ENCODE measurements at regions of chr13 and their contacts with region 1.

Region 1: DNA sequence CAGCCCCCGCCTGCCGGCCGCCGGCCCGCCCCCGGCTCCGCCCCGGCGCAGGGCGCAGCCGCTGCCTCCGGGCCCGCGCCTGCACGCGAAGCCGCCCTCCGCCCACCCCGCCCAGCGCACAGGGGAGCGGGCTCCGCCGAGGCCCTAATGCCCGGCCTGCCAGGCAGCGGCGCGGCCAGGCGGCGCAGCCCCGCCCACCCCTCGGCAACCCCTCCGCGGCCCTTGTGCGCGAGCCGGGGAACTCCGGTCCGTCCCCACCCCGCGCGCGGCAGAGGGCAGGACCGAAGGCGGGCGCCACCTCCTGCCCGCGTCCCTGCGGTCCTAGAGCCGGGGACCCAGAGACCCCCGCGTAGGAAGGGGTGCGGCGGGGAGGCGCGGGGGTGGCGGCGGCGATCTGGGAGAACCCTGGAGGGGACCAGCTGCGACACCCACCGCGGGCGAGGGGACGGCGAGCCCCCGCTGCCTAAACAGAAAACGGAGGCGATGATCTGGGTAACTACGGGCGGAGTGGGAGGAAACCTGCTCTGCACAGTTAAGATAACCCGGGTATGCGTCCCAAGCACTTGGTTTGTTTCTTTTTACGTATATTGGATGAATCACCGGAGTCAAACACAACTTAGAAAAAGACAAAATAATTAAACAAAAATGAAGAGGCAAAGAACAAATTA is 350 bp upstream of the USP12 start:
- DNase-seq: peak; percentile 92
- H3K4me3 Mint-ChIP-seq: peak overlapping the region; percentile 75
- H3K27ac Mint-ChIP-seq: peak overlapping the region; percentile 77
- H3K4me1 Mint-ChIP-seq: peaks cover 54% of the 10 kb centered on the region
- H3K27me3 Mint-ChIP-seq: no peaks in the 10 kb centered on the region

Region 2: DNA sequence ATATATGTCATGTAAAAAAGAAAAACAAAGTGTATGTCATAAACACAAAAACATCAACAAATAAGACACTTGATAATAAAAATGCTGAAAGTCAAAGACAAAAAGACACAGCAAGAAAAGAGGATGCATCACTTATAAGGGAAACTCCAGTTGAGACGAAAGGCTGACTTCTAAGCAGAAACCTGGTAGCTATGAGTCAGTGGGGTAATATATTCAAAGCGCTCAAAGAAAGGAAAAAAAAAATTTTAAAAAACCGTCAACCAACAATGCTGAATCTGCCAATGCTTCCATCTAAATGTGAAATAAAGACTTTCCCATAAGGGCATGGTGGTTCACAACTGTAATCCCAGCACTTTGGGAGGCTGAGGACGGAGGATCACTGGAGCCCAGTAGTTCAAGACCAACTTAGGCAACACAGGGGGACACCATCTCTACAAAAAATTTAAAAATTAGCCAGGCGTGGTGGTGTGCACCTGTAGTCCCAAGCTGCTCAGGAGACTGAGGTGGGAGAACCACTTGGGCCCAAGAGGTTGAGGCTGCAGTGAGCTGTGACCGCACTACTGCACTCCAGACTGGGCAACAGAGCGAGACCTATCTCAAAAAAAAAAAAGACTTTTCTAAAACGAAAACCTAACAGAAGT is 24.3 kb before region 1 on chr13:
- CTCF ChIA-PET with region 1: interaction called, 4 read pairs
- POLR2A ChIA-PET with region 1: interaction called, 6 read pairs
- intact Hi-C with region 1: loop called (anchors 1 kb)
- DNase-seq: no peak
- H3K4me3 Mint-ChIP-seq: peak overlapping the region; percentile 45
- H3K27ac Mint-ChIP-seq: peak overlapping the region; percentile 91
- H3K4me1 Mint-ChIP-seq: peaks cover 76% of the 10 kb centered on the region
- H3K27me3 Mint-ChIP-seq: no peaks in the 10 kb centered on the region

Region 3: DNA sequence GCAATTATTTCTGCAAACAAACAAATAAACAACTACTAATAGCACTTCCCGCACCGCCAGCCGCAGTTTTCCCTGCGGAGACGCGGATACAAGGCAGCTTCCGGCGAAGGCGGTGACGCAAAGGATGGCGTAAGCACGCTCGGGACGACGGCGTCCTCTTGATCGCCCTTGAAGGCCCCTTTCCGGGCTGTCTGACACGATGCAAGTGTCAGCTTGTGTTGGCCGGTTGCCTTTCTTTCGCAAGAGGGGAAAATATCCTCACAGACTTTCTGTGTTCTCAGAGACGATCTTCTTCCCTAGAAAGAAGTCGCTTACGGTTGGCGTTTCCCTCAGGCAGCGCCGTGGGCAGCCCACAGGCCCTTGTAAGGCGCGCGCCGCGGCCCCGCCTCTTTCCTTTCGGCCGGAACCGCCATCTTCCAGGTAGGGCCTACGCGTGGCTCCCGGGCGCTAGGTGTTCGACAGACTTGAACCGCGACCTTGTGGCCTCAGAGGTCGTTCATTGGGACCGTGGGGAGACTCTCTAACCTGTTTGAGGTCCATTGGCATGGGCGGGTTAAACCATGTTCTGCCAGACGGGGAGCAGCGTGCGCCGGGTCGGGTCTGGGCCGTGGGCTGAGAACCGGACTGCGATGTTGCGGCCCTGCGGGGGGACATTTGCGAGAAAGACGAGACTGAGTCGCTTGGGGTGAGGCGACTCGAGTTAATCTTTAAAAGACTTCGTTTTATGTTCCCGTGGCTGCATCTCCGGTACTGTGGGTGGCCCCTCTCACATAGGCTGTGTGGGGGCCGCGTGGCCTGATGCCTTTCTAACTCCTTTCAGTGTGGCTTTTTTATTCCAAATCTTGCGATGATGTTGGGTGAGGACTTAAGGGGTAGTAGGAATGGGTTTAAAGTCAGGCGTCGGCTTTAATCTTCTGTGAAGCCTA is 79.5 kb after region 1 on chr13 and contains the start of gene RPL21:
- CTCF ChIA-PET with region 1: no interaction called
- POLR2A ChIA-PET with region 1: interaction called, 12 read pairs
- intact Hi-C with region 1: loop called (anchors 1 kb)
- DNase-seq: peak; percentile 92
- H3K4me3 Mint-ChIP-seq: peak within 1 kb of the TSS; percentile 94
- H3K27ac Mint-ChIP-seq: peak within 1 kb of the TSS; percentile 95
- H3K4me1 Mint-ChIP-seq: peaks cover 48% of the 10 kb centered on the region
- H3K27me3 Mint-ChIP-seq: no peaks in the 10 kb centered on the region
- total RNA-seq, gene RPL21: 1,539 to 1,545 TPM

Region 4: GRCh38 chr13:27353166-27353583 is 181.2 kb after region 1 on chr13:
- CTCF ChIA-PET with region 1: interaction called, 4 read pairs
- POLR2A ChIA-PET with region 1: interaction called, 3 read pairs
- intact Hi-C with region 1: loop called (anchors 1 kb)
- DNase-seq: peak; percentile 79
- H3K4me3 Mint-ChIP-seq: peak overlapping the region; percentile 45
- H3K27ac Mint-ChIP-seq: peak overlapping the region; percentile 82
- H3K4me1 Mint-ChIP-seq: peaks cover 19% of the 10 kb centered on the region
- H3K27me3 Mint-ChIP-seq: peaks cover 12% of the 10 kb centered on the region

Region 5: DNA sequence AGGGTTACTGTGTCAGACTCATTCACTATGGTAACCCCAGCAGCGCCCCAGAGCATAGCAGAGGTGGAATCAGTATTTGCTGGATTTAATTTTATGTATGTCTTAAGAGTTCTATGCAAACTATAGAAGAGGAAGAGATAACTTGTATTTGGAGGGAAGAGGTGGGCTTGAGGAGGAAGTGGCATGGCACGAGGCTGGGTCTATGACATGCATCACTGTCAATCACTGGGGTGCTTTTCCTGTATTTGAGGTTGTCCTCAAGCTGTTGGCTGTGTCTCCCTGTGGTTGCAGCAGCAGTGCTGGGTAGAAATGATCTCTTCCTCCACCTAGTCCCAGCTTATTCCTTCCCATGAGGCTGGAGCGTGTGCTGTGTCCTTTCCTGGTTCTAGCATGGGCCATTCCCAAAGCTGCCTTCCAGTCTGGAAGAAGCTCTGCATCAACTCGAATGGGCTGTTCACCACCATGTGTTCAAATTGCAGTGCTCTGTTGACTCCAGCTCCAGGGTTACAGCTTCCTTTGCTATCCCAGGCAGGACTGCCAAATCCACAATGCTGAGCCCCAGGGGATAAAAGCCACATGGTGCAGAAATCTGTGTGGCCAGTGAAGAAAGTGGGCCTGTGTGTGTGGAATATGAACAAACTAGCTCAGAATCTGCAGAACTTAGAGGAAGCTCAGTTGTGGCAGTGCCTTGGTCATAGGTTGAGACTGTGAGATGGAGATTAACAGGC is 351.5 kb after region 1 on chr13:
- CTCF ChIA-PET with region 1: no interaction called
- POLR2A ChIA-PET with region 1: no interaction called
- intact Hi-C with region 1: no loop called
- DNase-seq: no peak
- H3K4me3 Mint-ChIP-seq: no peak overlapping the region
- H3K27ac Mint-ChIP-seq: no peak overlapping the region
- H3K4me1 Mint-ChIP-seq: no peaks in the 10 kb centered on the region
- H3K27me3 Mint-ChIP-seq: peaks cover 6% of the 10 kb centered on the region

Region 6: DNA sequence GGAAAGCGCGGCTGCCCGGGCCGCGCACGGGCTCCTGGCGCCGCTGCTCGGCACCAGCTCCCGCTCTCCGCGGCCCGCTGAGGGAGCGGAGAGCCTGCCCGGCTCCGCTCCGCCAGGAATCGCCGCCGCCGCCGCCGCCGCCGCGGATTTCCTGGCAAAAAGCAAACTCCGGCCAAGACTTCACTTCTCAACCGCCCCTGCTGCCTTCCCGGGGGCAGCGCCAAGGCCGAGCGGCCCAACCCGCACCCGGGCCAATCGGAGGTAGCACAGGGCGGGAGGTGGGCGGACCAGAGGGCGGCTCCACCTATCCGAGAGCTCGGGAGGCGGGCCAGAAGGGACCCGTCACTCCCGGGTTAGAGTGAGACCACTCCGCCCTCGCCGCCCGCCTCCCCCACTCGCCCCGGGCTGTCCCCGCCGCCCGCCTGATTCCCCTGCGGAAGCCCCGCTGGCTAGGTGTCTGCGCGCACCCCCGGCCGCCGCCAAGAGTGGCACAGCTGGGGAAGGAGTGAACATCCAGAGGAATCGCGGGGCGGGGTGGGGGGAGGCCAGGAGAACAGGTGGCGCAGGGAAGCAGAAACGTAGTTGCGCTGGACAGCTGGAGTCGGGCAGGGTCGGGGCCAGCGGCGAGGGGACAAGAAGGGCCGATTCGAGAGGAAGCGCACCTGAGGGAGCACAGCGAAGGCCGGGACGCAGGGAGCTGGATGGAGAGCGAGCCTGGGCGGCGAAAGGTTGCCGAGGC is 448.6 kb after region 1 on chr13 and contains the start of gene LNX2:
- CTCF ChIA-PET with region 1: no interaction called
- POLR2A ChIA-PET with region 1: no interaction called
- intact Hi-C with region 1: loop called (anchors 2 kb)
- DNase-seq: peak; percentile 98
- H3K4me3 Mint-ChIP-seq: peak within 1 kb of the TSS; percentile 92
- H3K27ac Mint-ChIP-seq: peak within 1 kb of the TSS; percentile 88
- H3K4me1 Mint-ChIP-seq: peaks cover 54% of the 10 kb centered on the region
- H3K27me3 Mint-ChIP-seq: no peaks in the 10 kb centered on the region
- total RNA-seq, gene LNX2: 5.0 to 5.4 TPM

Measured in activated CD4-positive, alpha-beta memory T cell treated with anti-CD3 and anti-CD28 coated beads for 36 hours (primary cell).